GM12878 (cell line): ENCODE measurements at regions of chr16 and their contacts with region 1.

Region 1: DNA sequence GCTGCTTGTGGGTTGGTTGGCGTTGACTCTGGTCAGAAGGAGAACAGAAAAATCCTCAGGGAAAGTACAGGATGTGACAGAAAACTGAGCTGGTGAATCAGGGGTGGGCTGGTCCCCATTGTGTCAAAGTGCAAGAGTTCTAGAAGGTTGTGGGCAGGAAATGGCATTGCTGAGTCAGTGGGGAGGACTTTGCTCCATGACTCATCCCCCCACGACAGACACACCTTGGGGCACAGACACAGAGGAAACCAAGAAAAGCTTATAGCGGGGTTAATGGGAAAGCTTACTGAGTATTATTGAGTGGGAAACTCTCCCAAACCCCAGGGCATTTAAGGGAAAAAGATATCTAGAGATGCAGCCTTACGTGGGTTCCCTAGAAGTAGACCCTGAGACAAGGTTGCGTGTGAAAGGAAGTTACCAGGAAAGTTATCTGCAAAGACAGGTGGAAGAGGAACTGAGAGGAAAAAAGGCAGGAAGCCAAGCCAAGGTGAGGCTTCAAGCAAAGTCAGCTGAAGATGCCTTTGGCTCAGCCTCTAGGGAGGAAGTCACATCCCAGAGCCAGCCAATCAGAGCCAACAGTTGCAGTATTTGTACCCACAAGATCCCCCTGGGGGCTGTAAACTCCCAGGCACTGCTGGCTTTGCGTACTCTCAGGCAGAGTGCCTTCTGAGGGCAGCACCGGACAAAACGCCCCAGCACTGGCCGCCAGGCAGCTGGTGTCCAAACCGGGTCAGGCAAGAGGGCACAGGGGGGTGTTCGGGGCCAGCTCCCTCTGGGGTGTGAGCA is 86.4 kb downstream of the FOXL1 start:
- DNase-seq: peak; percentile 71
- ATAC-seq: peak; percentile 89
- H3K4me3 ChIP-seq: no peak overlapping the region
- H3K27ac ChIP-seq: 0 out of 2 replicates have a peak overlapping the region, but pooled peaks have one; percentile 10
- H3K4me1 ChIP-seq: peaks cover 4% of the 10 kb centered on the region; the same call in 1 of the 2 replicates
- H3K27me3 ChIP-seq: no peaks in the 10 kb centered on the region
- CTCF ChIP-seq: no peak
- EP300 ChIP-seq: peak; percentile 7 to 13; a peak in 2 of 4 replicates
- POLR2A ChIP-seq: no peak
- RAD21 ChIP-seq: no peak

Region 2: DNA sequence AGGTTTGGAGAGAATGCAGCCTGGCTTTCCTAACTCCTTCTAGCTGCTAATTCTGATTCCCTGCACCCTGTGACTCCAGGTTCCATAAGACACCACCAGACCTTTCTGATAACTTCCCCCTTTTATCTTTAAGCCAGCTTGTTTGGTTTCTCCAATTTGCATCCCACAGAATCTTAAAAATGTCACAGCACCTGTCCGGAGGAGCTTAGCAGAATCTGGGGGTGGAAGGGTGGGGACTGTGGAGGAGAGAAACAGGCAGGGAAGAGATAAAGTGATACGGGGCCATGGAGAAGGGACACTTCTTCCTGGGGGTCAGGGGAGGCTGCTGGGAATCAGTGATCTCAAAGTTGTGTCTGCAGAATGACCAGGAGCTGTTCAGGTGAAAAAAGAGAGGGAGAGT is 27.0 kb before region 1 on chr16:
- CTCF ChIA-PET with region 1: no interaction called
- POLR2A ChIA-PET with region 1: no interaction called
- RAD21 ChIA-PET with region 1: interaction called, 3 read pairs
- SMC1A ChIA-PET with region 1: interaction called, 10 read pairs
- in situ Hi-C with region 1: no loop called
- intact Hi-C with region 1: no loop called
- DNase-seq: no peak
- ATAC-seq: no peak
- H3K4me3 ChIP-seq: no peak overlapping the region
- H3K27ac ChIP-seq: no peak overlapping the region
- H3K4me1 ChIP-seq: no peaks in the 10 kb centered on the region
- H3K27me3 ChIP-seq: peaks cover 0 to 3% of the 10 kb centered on the region in 2 experiments; a peak in 3 of 4 replicates
- CTCF ChIP-seq: no peak
- EP300 ChIP-seq: no peak
- POLR2A ChIP-seq: no peak
- RAD21 ChIP-seq: no peak

Region 3: DNA sequence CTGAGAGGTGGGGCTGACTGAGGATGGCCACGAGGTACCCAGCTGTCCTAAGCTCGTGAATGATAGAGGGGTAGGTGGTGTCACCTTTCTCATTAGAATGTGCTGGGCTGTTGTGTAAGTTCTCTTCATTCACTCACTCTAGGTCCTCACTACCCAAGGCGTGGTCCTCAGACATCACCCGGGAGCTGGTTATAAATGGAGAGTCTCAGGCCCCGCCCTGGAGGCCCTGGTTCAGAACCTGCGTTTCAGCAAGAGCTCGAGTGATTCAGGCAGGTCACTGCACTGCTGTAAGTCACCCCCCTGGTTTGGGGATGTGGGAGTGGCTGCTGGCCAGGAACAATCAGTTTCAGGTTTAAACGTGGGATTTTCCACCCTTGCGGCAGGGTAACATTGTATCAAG is 53.4 kb after region 1 on chr16:
- CTCF ChIA-PET with region 1: interaction called, 3 read pairs
- POLR2A ChIA-PET with region 1: no interaction called
- RAD21 ChIA-PET with region 1: interaction called, 11 read pairs
- SMC1A ChIA-PET with region 1: interaction called, 6 read pairs
- in situ Hi-C with region 1: no loop called
- intact Hi-C with region 1: no loop called
- DNase-seq: peak; percentile 3
- ATAC-seq: peak; percentile 68
- H3K4me3 ChIP-seq: no peak overlapping the region
- H3K27ac ChIP-seq: no peak overlapping the region
- H3K4me1 ChIP-seq: no peaks in the 10 kb centered on the region
- H3K27me3 ChIP-seq: no peaks in the 10 kb centered on the region
- CTCF ChIP-seq: no peak
- EP300 ChIP-seq: no peak
- POLR2A ChIP-seq: no peak
- RAD21 ChIP-seq: no peak

Region 4: DNA sequence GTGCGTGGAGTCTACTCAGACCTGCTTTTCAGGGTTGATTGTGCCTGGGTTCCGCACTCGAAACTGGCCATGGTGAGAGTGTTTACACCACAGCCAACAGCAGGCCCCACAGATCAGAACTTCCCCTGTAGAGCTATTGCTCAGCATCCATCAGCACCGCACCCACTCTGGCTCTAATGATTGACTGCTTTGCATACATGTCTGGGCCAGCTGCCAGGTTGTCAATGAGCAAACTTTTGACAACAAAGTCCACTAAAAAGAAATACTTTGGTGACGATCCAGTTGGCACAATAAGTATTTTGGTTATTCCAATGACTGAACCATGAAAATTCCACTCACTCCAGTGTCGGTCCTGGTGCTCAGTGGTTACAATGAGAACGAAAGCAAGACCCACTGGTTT is 104.3 kb after region 1 on chr16:
- CTCF ChIA-PET with region 1: interaction called, 6 read pairs
- POLR2A ChIA-PET with region 1: interaction called, 4 read pairs
- RAD21 ChIA-PET with region 1: interaction called, 13 read pairs
- SMC1A ChIA-PET with region 1: interaction called, 4 read pairs
- in situ Hi-C with region 1: no loop called
- intact Hi-C with region 1: no loop called
- DNase-seq: peak; percentile 8
- ATAC-seq: peak; percentile 91
- H3K4me3 ChIP-seq: no peak overlapping the region
- H3K27ac ChIP-seq: no peak overlapping the region
- H3K4me1 ChIP-seq: no peaks in the 10 kb centered on the region
- H3K27me3 ChIP-seq: peaks cover 0 to 2% of the 10 kb centered on the region in 2 experiments; a peak in 1 of 4 replicates
- CTCF ChIP-seq: no peak
- EP300 ChIP-seq: no peak
- POLR2A ChIP-seq: no peak
- RAD21 ChIP-seq: no peak

Region 5: GRCh38 chr16:86834451-86835035 is 169.8 kb after region 1 on chr16:
- CTCF ChIA-PET with region 1: no interaction called
- POLR2A ChIA-PET with region 1: no interaction called
- RAD21 ChIA-PET with region 1: interaction called, 11 read pairs
- SMC1A ChIA-PET with region 1: no interaction called
- in situ Hi-C with region 1: no loop called
- intact Hi-C with region 1: no loop called
- DNase-seq: no peak
- ATAC-seq: no peak
- H3K4me3 ChIP-seq: no peak overlapping the region
- H3K27ac ChIP-seq: no peak overlapping the region
- H3K4me1 ChIP-seq: no peaks in the 10 kb centered on the region
- H3K27me3 ChIP-seq: no peaks in the 10 kb centered on the region
- CTCF ChIP-seq: no peak; a peak in 1 of 6 replicates
- EP300 ChIP-seq: no peak
- POLR2A ChIP-seq: no peak
- RAD21 ChIP-seq: no peak